SK-N-SH (cell line): ENCODE measurements at regions of chr10 and their contacts with region 1.

Region 1: GRCh38 chr10:71396084-71396720 is 518 bp upstream of the CDH23 start:
- DNase-seq: peak; percentile 90
- H3K4me3 ChIP-seq: peak overlapping the region in 1 of 2 experiments; percentile 41; a peak in 2 of 4 replicates
- H3K27ac ChIP-seq: no peak overlapping the region
- H3K4me1 ChIP-seq: peaks cover 0 to 9% of the 10 kb centered on the region in 2 experiments; a peak in 1 of 4 replicates
- H3K27me3 ChIP-seq: peaks cover 48% of the 10 kb centered on the region
- CTCF ChIP-seq: no peak
- EP300 ChIP-seq: no peak
- RAD21 ChIP-seq: peak; percentile 83

Region 2: GRCh38 chr10:71314028-71314693 is 82.0 kb before region 1 on chr10:
- CTCF ChIA-PET with region 1: interaction called, 37 read pairs
- POLR2A ChIA-PET with region 1: interaction called, 3 read pairs
- DNase-seq: peak; percentile 81
- H3K4me3 ChIP-seq: no peak overlapping the region
- H3K27ac ChIP-seq: no peak overlapping the region
- H3K4me1 ChIP-seq: peaks cover 0 to 11% of the 10 kb centered on the region in 2 experiments; a peak in 1 of 4 replicates
- H3K27me3 ChIP-seq: no peaks in the 10 kb centered on the region
- CTCF ChIP-seq: peak; percentile 69
- EP300 ChIP-seq: no peak
- RAD21 ChIP-seq: peak; percentile 80

Region 3: DNA sequence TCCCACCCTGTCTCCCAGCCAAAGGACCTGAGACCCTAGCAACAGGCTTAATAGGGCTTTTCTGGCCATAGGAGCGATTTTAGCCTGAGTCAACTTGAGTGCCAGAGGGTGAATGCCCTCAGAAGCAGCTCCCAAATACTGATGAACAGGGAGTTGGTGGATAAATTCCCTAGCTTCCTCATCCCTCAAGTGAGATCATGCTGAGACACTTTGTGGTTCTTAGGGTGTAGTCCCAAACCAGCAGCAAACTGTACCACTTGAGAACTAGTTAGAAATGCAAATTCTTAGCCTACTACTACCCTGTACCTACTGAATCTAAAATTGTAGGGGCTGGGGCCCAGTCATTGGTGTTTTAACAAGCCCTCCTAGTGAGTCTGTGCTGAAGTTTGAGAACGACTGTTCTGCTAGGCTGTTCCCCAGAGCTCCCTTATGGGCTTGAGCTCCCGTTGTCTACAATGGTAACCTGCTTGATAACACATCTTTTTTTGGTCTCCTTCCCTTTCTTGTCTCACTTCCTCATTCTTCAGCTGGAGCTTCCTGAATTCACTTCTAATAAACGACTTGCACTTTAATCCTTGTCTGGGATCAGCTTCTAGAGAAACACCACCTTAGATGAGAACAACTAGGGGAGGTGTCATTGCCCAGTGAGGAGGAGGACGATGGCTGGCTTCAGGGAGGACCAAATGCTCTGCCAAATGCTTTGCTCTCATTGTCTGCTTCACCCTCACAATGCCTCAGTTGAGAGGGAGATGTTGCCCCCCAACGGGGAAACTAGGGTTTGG is 17.7 kb before region 1 on chr10:
- CTCF ChIA-PET with region 1: interaction called, 39 read pairs
- POLR2A ChIA-PET with region 1: no interaction called
- DNase-seq: no peak
- H3K4me3 ChIP-seq: no peak overlapping the region
- H3K27ac ChIP-seq: no peak overlapping the region
- H3K4me1 ChIP-seq: peaks cover 0 to 3% of the 10 kb centered on the region in 2 experiments; a peak in 1 of 4 replicates
- H3K27me3 ChIP-seq: no peaks in the 10 kb centered on the region
- CTCF ChIP-seq: no peak
- EP300 ChIP-seq: no peak
- RAD21 ChIP-seq: no peak

Region 4: DNA sequence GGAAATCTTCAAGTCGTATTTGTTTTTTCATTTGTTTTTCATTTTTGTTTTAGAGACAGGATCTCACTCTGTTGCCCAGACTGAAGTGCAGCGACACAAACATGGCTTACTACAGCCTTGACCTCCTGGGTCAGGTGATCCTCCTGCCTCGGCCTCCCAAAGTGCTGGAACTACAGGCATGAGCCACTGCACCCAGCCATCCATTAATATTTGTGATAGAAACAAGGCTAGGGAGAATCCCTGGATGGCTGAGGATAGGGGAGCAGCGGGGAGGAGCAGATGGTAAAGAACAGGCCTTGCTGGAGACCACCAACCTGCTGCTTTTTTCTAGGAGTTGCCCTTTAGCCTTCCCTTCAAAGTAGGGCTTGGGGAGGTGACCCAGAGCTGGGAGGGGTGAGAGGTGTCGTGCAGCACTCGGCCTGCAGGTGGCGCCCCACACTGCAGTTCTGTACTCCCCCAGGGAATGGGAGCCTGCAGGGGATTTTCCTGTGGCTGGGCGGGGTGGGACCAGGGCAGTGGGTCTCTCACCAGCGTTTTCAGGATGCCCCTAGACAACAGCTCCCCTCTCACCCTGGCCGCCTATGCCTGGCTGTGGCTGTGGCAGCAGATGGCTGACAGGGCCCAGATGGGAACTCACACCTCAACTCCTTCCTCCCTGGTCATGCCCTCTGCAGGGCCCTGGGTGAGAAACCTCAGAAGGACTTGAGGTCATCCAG is 12.1 kb before region 1 on chr10:
- CTCF ChIA-PET with region 1: interaction called, 39 read pairs
- POLR2A ChIA-PET with region 1: no interaction called
- DNase-seq: peak; percentile 84
- H3K4me3 ChIP-seq: no peak overlapping the region; a peak in 1 of 4 replicates
- H3K27ac ChIP-seq: no peak overlapping the region
- H3K4me1 ChIP-seq: no peaks in the 10 kb centered on the region
- H3K27me3 ChIP-seq: peaks cover 30% of the 10 kb centered on the region; the same call in 1 of the 2 replicates
- CTCF ChIP-seq: peak; percentile 89
- EP300 ChIP-seq: no peak
- RAD21 ChIP-seq: peak; percentile 80

Region 5: DNA sequence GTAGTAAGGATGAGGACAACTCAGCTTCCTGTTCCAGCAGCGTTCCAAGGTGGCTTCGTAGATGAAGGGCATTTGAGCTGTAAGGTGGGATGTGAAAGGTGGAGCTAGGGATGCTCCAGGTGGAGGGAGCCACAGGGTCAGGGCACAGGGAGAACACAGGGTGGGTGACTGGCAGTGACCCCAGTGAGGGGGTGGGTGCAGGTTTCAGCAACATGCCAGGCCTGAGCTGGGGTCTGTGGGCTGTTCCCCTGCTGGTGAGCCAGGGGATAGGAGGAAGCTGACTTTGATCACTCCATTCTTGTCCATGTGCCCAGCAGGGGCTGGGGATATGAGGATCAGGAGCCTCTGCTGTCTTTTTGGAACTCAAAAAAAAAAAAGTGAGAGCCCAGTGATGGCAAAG is 33.7 kb after region 1 on chr10:
- CTCF ChIA-PET with region 1: interaction called, 13 read pairs
- POLR2A ChIA-PET with region 1: no interaction called
- DNase-seq: peak; percentile 46
- H3K4me3 ChIP-seq: no peak overlapping the region
- H3K27ac ChIP-seq: no peak overlapping the region
- H3K4me1 ChIP-seq: no peaks in the 10 kb centered on the region
- H3K27me3 ChIP-seq: no peaks in the 10 kb centered on the region
- CTCF ChIP-seq: peak; percentile 23; the same call in 1 of the 2 replicates
- EP300 ChIP-seq: no peak
- RAD21 ChIP-seq: no peak

Region 6: DNA sequence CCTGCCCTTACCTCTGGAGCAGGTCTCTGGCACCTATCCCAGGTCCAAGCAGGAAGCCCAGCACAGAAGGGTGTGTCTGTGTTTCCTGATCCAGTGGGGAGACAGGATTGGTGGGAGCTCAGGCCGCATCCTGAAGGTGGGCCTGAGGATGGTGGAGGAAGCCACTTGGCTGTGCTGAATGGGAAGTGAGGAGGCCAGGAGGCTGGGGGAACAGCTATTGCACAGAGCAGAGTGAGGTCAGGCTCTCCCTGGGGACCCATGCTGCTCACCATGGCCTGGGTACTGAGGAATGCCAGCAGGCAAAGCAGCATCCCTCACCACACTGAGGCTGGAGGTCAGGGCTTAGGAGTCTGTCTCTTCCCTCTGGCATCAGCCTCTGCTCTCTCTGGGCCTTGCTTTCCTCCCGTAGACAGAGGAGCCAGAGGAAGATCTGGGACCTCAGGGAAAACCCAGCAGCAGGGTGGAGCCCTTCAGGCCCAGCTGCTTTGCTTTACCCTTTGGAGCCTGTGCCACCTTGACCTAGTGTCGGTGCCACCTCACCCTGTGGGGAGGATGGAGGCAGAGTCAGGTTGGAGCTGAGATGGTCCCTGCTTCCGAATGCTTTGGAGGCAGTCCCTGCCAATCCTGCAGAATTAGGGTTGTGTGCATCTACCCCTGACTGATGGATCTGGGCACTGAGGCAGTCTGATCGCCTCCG is 39.5 kb after region 1 on chr10:
- CTCF ChIA-PET with region 1: interaction called, 13 read pairs
- POLR2A ChIA-PET with region 1: no interaction called
- DNase-seq: peak; percentile 14
- H3K4me3 ChIP-seq: no peak overlapping the region
- H3K27ac ChIP-seq: no peak overlapping the region
- H3K4me1 ChIP-seq: no peaks in the 10 kb centered on the region; a peak in 1 of 4 replicates
- H3K27me3 ChIP-seq: peaks cover 16% of the 10 kb centered on the region; the same call in 1 of the 2 replicates
- CTCF ChIP-seq: no peak
- EP300 ChIP-seq: no peak
- RAD21 ChIP-seq: no peak

Region 7: DNA sequence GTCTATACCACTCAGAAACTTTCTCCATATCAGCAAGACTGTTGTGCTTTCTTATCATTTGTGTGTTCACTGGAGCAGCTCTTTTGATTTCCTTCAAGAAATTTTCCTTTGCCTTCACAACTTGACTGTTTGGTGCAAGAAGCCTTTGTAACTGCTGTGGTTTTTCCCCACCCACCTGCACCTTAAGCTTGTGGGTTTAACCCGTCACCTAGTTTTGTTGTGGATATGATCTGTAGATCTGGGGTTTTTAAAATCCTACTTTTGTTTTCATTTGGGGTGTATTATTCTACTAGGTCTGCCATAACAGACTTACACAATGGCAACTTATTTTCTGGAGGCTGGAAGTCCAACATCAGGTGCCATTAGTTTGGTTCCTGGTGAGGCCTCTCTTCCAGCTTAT is 537.4 kb after region 1 on chr10:
- CTCF ChIA-PET with region 1: no interaction called
- POLR2A ChIA-PET with region 1: no interaction called
- DNase-seq: no peak
- H3K4me3 ChIP-seq: no peak overlapping the region
- H3K27ac ChIP-seq: no peak overlapping the region
- H3K4me1 ChIP-seq: no peaks in the 10 kb centered on the region
- H3K27me3 ChIP-seq: no peaks in the 10 kb centered on the region
- CTCF ChIP-seq: no peak
- EP300 ChIP-seq: no peak
- RAD21 ChIP-seq: no peak